Common myeloid progenitor, CD34-positive (primary cell): ENCODE measurements at regions of chr7 and their contacts with region 1.

Region 1: GRCh38 chr7:151759591-151760042 is 117.3 kb downstream of the PRKAG2 start:
- DNase-seq: peak; percentile 60 to 74 (median 67)
- H3K4me3 ChIP-seq: no peak overlapping the region
- H3K27ac ChIP-seq: no peak overlapping the region
- H3K4me1 ChIP-seq: peaks cover 0 to 22% (median 13%) of the 10 kb centered on the region in 4 experiments
- H3K27me3 ChIP-seq: no peaks in the 10 kb centered on the region

Region 2: GRCh38 chr7:151570366-151570915 is 189.2 kb before region 1 on chr7:
- CTCF ChIA-PET with region 1: interaction called, 27 read pairs
- POLR2A ChIA-PET with region 1: no interaction called
- DNase-seq: peak; percentile 25 to 58 (median 54)
- H3K4me3 ChIP-seq: no peak overlapping the region
- H3K27ac ChIP-seq: no peak overlapping the region
- H3K4me1 ChIP-seq: no peaks in the 10 kb centered on the region
- H3K27me3 ChIP-seq: no peaks in the 10 kb centered on the region

Region 3: GRCh38 chr7:151626422-151627115 is 133.0 kb before region 1 on chr7:
- CTCF ChIA-PET with region 1: interaction called, 118 read pairs
- POLR2A ChIA-PET with region 1: no interaction called
- DNase-seq: peak; percentile 69 to 79 (median 79)
- H3K4me3 ChIP-seq: no peak overlapping the region
- H3K27ac ChIP-seq: no peak overlapping the region
- H3K4me1 ChIP-seq: peaks cover 9 to 12% (median 11%) of the 10 kb centered on the region in 4 experiments
- H3K27me3 ChIP-seq: no peaks in the 10 kb centered on the region

Region 4: GRCh38 chr7:151631968-151632749 is 127.5 kb before region 1 on chr7:
- CTCF ChIA-PET with region 1: interaction called, 118 read pairs
- POLR2A ChIA-PET with region 1: no interaction called
- DNase-seq: peak; percentile 86 to 92 (median 91)
- H3K4me3 ChIP-seq: peak overlapping the region; percentile 46 to 99 (median 87)
- H3K27ac ChIP-seq: peak overlapping the region; percentile 48 to 82
- H3K4me1 ChIP-seq: peaks cover 12 to 20% (median 15%) of the 10 kb centered on the region in 4 experiments
- H3K27me3 ChIP-seq: no peaks in the 10 kb centered on the region